GM12878 (cell line): ENCODE measurements at regions of chr13 and their contacts with region 1.

Region 1: GRCh38 chr13:30465585-30466357 is at the start of gene HMGB1:
- DNase-seq: peak; percentile 97
- ATAC-seq: peak; percentile 93
- H3K4me3 ChIP-seq: peak within 1 kb of the TSS; percentile 82
- H3K27ac ChIP-seq: peak within 1 kb of the TSS; percentile 97
- H3K4me1 ChIP-seq: 0 out of 2 replicates have a peak, but pooled peaks cover 10% of the 10 kb centered on the region
- H3K27me3 ChIP-seq: no peaks in the 10 kb centered on the region
- CTCF ChIP-seq: no peak
- EP300 ChIP-seq: no peak
- POLR2A ChIP-seq: peak; percentile 96
- RAD21 ChIP-seq: no peak
- polyA plus RNA-seq, gene HMGB1: 2,416 to 2,529 TPM

Region 2: GRCh38 chr13:30355384-30355699 is 110.4 kb before region 1 on chr13:
- CTCF ChIA-PET with region 1: interaction called, 7 read pairs
- POLR2A ChIA-PET with region 1: no interaction called
- RAD21 ChIA-PET with region 1: interaction called, 4 read pairs
- SMC1A ChIA-PET with region 1: interaction called, 3 read pairs
- in situ Hi-C with region 1: no loop called
- intact Hi-C with region 1: loop called (anchors 5 kb)
- DNase-seq: no peak
- ATAC-seq: peak; percentile 91
- H3K4me3 ChIP-seq: no peak overlapping the region
- H3K27ac ChIP-seq: no peak overlapping the region
- H3K4me1 ChIP-seq: no peaks in the 10 kb centered on the region
- H3K27me3 ChIP-seq: no peaks in the 10 kb centered on the region
- CTCF ChIP-seq: peak; percentile 39 to 65 (median 48)
- EP300 ChIP-seq: no peak
- POLR2A ChIP-seq: no peak
- RAD21 ChIP-seq: peak; percentile 75

Region 3: GRCh38 chr13:30408319-30409101 is 57.3 kb before region 1 on chr13:
- CTCF ChIA-PET with region 1: interaction called, 21 read pairs
- POLR2A ChIA-PET with region 1: interaction called, 3 read pairs
- RAD21 ChIA-PET with region 1: interaction called, 9 read pairs
- SMC1A ChIA-PET with region 1: interaction called, 9 read pairs
- in situ Hi-C with region 1: no loop called
- intact Hi-C with region 1: loop called (anchors 2 kb)
- DNase-seq: no peak
- ATAC-seq: peak; percentile 97
- H3K4me3 ChIP-seq: no peak overlapping the region; the same call in 1 of the 2 replicates
- H3K27ac ChIP-seq: no peak overlapping the region
- H3K4me1 ChIP-seq: peaks cover 6% of the 10 kb centered on the region
- H3K27me3 ChIP-seq: no peaks in the 10 kb centered on the region
- CTCF ChIP-seq: peak; percentile 56 to 86 (median 74)
- EP300 ChIP-seq: 0 out of 4 replicates have a peak, but pooled peaks of 1 of the 2 experiments have one; percentile 22
- POLR2A ChIP-seq: peak; percentile 62
- RAD21 ChIP-seq: peak; percentile 72

Region 4: GRCh38 chr13:30429721-30430694 is 35.8 kb before region 1 on chr13:
- CTCF ChIA-PET with region 1: interaction called, 8 read pairs
- POLR2A ChIA-PET with region 1: no interaction called
- RAD21 ChIA-PET with region 1: interaction called, 5 read pairs
- SMC1A ChIA-PET with region 1: interaction called, 10 read pairs
- in situ Hi-C with region 1: no loop called
- intact Hi-C with region 1: no loop called
- DNase-seq: peak; percentile 59
- ATAC-seq: peak; percentile 82
- H3K4me3 ChIP-seq: peak overlapping the region; percentile 29
- H3K27ac ChIP-seq: peak overlapping the region; percentile 50
- H3K4me1 ChIP-seq: peaks cover 28% of the 10 kb centered on the region
- H3K27me3 ChIP-seq: no peaks in the 10 kb centered on the region
- CTCF ChIP-seq: no peak
- EP300 ChIP-seq: peak; percentile 54 to 69; a peak in 2 of 4 replicates
- POLR2A ChIP-seq: no peak
- RAD21 ChIP-seq: 0 out of 2 replicates have a peak, but pooled peaks have one; percentile 1

Region 5: GRCh38 chr13:30551189-30551588 is 85.4 kb after region 1 on chr13:
- CTCF ChIA-PET with region 1: interaction called, 3 read pairs
- POLR2A ChIA-PET with region 1: interaction called, 3 read pairs
- RAD21 ChIA-PET with region 1: interaction called, 4 read pairs
- SMC1A ChIA-PET with region 1: interaction called, 3 read pairs
- in situ Hi-C with region 1: no loop called
- intact Hi-C with region 1: loop called (anchors 5 kb)
- DNase-seq: no peak
- ATAC-seq: peak; percentile 99
- H3K4me3 ChIP-seq: no peak overlapping the region
- H3K27ac ChIP-seq: no peak overlapping the region
- H3K4me1 ChIP-seq: no peaks in the 10 kb centered on the region
- H3K27me3 ChIP-seq: no peaks in the 10 kb centered on the region
- CTCF ChIP-seq: peak; percentile 47 to 72 (median 52); a peak in 5 of 6 replicates
- EP300 ChIP-seq: no peak
- POLR2A ChIP-seq: no peak
- RAD21 ChIP-seq: peak; percentile 72

Region 6: DNA sequence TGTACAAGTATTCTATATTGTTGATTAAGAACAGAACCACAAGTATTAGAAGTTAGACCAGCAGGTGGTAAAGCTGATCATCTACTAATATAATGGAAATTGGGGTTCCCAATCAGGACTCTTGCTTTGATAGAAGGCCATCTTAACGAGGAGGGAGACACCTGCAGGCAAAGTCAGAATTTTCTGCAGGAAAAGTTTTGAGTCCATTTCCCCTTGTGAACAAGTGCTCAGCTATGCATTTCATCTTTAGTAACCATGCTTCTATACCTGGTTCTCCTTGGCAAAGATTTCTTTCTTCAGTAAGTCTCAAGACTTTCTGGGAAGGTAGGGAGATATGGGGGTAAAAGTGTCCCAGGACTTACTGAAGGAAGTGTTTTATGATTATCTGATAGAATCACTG is 115.8 kb after region 1 on chr13:
- CTCF ChIA-PET with region 1: interaction called, 5 read pairs
- POLR2A ChIA-PET with region 1: no interaction called
- RAD21 ChIA-PET with region 1: interaction called, 11 read pairs
- SMC1A ChIA-PET with region 1: no interaction called
- in situ Hi-C with region 1: no loop called
- intact Hi-C with region 1: no loop called
- DNase-seq: no peak
- ATAC-seq: peak; percentile 20; the same call in 1 of the 3 replicates
- H3K4me3 ChIP-seq: no peak overlapping the region
- H3K27ac ChIP-seq: no peak overlapping the region
- H3K4me1 ChIP-seq: peaks cover 12% of the 10 kb centered on the region; the same call in 1 of the 2 replicates
- H3K27me3 ChIP-seq: peaks cover 2 to 3% of the 10 kb centered on the region in 2 experiments; a peak in 1 of 4 replicates
- CTCF ChIP-seq: peak; percentile 26 to 62 (median 50); a peak in 5 of 6 replicates
- EP300 ChIP-seq: no peak
- POLR2A ChIP-seq: no peak
- RAD21 ChIP-seq: peak; percentile 69

Region 7: DNA sequence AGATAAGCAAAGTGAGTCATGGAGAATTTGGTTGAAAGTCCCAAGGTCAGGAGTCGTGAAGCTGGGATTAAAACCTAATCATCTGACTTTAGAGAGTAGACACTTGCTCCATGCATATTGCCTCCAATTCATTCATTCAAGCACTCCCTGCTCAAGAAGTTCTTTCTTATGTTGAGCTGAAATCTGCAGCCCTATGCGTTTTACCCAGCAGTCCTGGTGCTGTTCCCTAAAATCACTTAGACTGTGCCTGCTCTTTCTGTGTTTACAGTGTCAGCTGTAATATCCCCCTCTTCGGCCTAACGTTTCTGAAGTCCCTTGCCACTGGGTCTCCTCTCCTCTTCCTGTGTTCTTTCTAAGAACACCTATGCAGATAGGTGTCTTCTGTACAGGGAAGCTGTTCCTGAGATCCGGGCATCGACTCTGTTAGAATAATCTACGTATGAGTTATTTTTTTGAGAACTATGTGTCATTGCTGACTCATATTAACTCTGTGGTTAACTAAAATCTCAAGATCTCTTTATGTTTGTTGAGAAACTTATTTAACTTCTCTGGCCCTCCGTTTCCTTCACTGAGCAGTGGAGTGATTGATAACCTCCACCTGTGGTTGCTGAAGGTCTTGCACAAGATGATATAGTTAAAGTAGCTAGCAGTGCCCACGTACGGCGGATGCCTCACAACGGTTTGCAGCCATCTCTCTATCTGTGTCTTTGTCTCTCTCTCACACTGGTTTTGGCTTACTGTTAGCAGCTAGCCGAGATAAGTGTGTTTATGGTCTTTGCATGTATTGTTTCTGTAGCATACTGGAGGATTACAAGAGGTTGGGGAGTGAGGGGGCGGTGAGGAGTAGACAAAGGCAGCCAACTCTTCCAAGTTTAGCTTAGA is 274.2 kb after region 1 on chr13:
- CTCF ChIA-PET with region 1: no interaction called
- POLR2A ChIA-PET with region 1: no interaction called
- RAD21 ChIA-PET with region 1: no interaction called
- SMC1A ChIA-PET with region 1: no interaction called
- in situ Hi-C with region 1: no loop called
- intact Hi-C with region 1: loop called (anchors 5 kb)
- DNase-seq: peak; percentile 76
- ATAC-seq: peak; percentile 54
- H3K4me3 ChIP-seq: peak overlapping the region; percentile 42
- H3K27ac ChIP-seq: no peak overlapping the region
- H3K4me1 ChIP-seq: peaks cover 60% of the 10 kb centered on the region
- H3K27me3 ChIP-seq: no peaks in the 10 kb centered on the region
- CTCF ChIP-seq: no peak
- EP300 ChIP-seq: peak in 1 of 2 experiments; percentile 39; a peak in 2 of 4 replicates
- POLR2A ChIP-seq: no peak
- RAD21 ChIP-seq: peak; percentile 32; the same call in 1 of the 2 replicates